Panc1 (cell line): ENCODE measurements at regions of chr11 and their contacts with region 1.

Region 1: GRCh38 chr11:26297189-26297975 is 34.5 kb upstream of the ANO3 start:
- DNase-seq: no peak
- ATAC-seq: 0 out of 2 replicates have a peak, but pooled peaks have one; percentile 56
- H3K4me3 ChIP-seq: no peak overlapping the region
- H3K27ac ChIP-seq: no peak overlapping the region
- H3K4me1 ChIP-seq: no peaks in the 10 kb centered on the region
- H3K27me3 ChIP-seq: 0 out of 2 replicates have a peak, but pooled peaks cover 3% of the 10 kb centered on the region
- CTCF ChIP-seq: peak; percentile 68; the same call in 1 of the 2 replicates

Region 2: DNA sequence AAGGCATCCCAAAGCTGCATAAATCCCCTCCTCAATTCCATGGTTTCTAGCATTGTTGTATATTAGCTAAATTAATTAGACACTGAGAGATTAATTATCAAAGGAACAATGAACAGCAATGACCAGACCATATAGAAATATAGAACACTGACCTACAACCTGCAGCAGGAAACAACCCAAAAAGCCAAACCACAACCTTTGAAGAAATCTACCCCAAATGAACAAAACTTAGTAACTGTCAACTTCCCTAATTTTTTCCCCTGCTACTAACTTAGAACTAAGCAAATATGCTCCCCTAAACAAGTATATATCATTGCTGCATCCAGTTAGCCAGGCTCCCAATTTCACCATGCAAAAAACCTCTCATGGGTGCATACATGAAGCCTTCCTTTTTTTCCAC is 233.5 kb before region 1 on chr11:
- CTCF ChIA-PET with region 1: no interaction called
- POLR2A ChIA-PET with region 1: no interaction called
- in situ Hi-C with region 1: no loop called
- intact Hi-C with region 1: no loop called
- DNase-seq: no peak
- ATAC-seq: no peak
- H3K4me3 ChIP-seq: no peak overlapping the region
- H3K27ac ChIP-seq: no peak overlapping the region
- H3K4me1 ChIP-seq: no peaks in the 10 kb centered on the region
- H3K27me3 ChIP-seq: no peaks in the 10 kb centered on the region
- CTCF ChIP-seq: no peak

Region 3: GRCh38 chr11:26551186-26551801 is 253.9 kb after region 1 on chr11:
- CTCF ChIA-PET with region 1: no interaction called
- POLR2A ChIA-PET with region 1: no interaction called
- in situ Hi-C with region 1: no loop called
- intact Hi-C with region 1: loop called (anchors 10 kb)
- DNase-seq: no peak
- ATAC-seq: no peak
- H3K4me3 ChIP-seq: no peak overlapping the region
- H3K27ac ChIP-seq: no peak overlapping the region
- H3K4me1 ChIP-seq: no peaks in the 10 kb centered on the region
- H3K27me3 ChIP-seq: no peaks in the 10 kb centered on the region
- CTCF ChIP-seq: peak; percentile 40; the same call in 1 of the 2 replicates

Region 4: GRCh38 chr11:26649884-26650283 is 352.5 kb after region 1 on chr11:
- CTCF ChIA-PET with region 1: interaction called, 4 read pairs
- POLR2A ChIA-PET with region 1: no interaction called
- in situ Hi-C with region 1: no loop called
- intact Hi-C with region 1: loop called (anchors 5 kb)
- DNase-seq: peak; percentile 36
- ATAC-seq: peak; percentile 97
- H3K4me3 ChIP-seq: no peak overlapping the region
- H3K27ac ChIP-seq: no peak overlapping the region
- H3K4me1 ChIP-seq: no peaks in the 10 kb centered on the region
- H3K27me3 ChIP-seq: 0 out of 2 replicates have a peak, but pooled peaks cover 2% of the 10 kb centered on the region
- CTCF ChIP-seq: peak; percentile 86

Region 5: DNA sequence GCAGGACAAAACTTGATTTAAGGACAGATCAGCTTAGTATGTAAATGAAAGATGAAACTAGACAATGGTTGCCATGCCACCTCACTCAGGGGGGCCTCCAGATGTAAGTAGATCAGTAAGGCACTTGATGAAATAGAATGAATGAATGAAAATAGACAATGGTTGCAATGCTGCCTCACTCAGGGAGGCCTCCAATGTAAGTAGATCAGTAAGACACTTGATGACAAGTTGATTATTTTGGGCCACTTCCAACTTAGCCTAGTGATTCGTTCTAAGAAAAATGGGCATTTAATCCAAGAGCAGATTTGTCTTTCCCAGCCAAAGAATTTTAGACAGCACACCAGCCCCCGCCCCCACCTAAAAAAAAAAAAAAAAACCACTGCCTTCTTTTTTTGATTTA is 443.7 kb after region 1 on chr11:
- CTCF ChIA-PET with region 1: no interaction called
- POLR2A ChIA-PET with region 1: no interaction called
- in situ Hi-C with region 1: no loop called
- intact Hi-C with region 1: loop called (anchors 10 kb)
- DNase-seq: no peak
- ATAC-seq: no peak
- H3K4me3 ChIP-seq: no peak overlapping the region
- H3K27ac ChIP-seq: no peak overlapping the region
- H3K4me1 ChIP-seq: no peaks in the 10 kb centered on the region
- H3K27me3 ChIP-seq: no peaks in the 10 kb centered on the region
- CTCF ChIP-seq: no peak